Ascending aorta (tissue), 2 donors: ENCODE measurements at regions of chr19 and their contacts with region 1.

Region 1: DNA sequence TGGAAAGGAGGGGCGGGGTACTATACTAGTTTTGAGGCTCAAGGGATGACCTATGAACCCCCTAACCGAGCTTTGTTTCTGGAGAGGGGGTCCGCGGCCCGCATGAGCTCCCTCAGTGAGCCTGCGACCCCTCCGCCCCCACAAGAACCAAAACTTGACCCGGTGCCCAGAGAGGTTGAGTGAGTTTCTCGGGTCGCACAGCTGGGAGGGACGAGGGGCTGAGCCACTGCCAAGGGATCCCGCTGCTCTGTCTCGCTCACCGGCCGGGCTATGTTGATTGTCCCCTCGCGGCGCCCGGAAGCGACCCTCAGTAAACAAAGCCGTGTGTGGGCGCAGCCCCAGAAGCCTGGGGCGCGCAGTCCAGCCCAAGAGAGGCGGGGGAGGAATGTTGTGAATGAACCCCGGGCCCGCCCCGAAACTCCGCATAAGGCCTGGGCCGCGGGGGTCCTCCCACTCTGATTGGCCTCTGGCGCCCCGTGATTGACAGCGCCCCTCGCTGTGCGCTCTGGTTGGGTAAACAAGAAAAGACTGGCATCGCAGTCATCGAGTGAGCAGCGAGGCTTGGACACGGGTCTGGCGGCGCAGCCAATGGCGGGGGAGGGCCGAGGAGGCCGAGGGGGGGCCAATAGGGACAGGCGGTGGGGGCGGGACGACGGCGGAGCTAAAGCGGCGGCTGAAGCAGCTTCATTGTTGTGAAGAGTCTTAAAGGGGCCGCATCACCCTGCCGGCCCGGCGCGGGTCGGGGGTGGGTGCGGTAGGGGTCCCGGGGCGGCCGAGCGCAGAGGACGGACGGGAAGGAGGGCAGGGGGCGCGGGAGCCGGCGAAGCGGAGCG is at the start of gene ZSWIM4:
- DNase-seq: peak; percentile 98 to 100
- H3K4me3 ChIP-seq: peak within 1 kb of the TSS; percentile 86 to 88
- H3K27ac ChIP-seq: peak within 1 kb of the TSS; percentile 92 to 96
- H3K4me1 ChIP-seq: peaks cover 7 to 30% of the 10 kb centered on the region in 2 donors
- H3K27me3 ChIP-seq: no peaks in the 10 kb centered on the region
- CTCF ChIP-seq: no peak
- total RNA-seq, gene ZSWIM4: 23.2 TPM

Region 2: GRCh38 chr19:13784731-13785452 is 10.1 kb before region 1 on chr19:
- intact Hi-C with region 1: loop called (anchors 2 kb)
- DNase-seq: peak; percentile 28 to 87
- H3K4me3 ChIP-seq: no peak overlapping the region
- H3K27ac ChIP-seq: peak overlapping the region; percentile 76 to 94
- H3K4me1 ChIP-seq: peaks cover 25 to 53% of the 10 kb centered on the region in 2 donors
- H3K27me3 ChIP-seq: no peaks in the 10 kb centered on the region
- CTCF ChIP-seq: peak; percentile 72 to 83 (median 76)

Region 3: GRCh38 chr19:13823256-13823655 is 28.3 kb after region 1 on chr19:
- intact Hi-C with region 1: loop called (anchors 2 kb)
- DNase-seq: no peak
- H3K4me3 ChIP-seq: no peak overlapping the region
- H3K27ac ChIP-seq: peak overlapping the region; percentile 53 to 82
- H3K4me1 ChIP-seq: peaks cover 0 to 9% of the 10 kb centered on the region in 2 donors
- H3K27me3 ChIP-seq: no peaks in the 10 kb centered on the region
- CTCF ChIP-seq: no peak

Region 4: GRCh38 chr19:13833330-13834243 is 38.6 kb after region 1 on chr19:
- intact Hi-C with region 1: loop called (anchors 5 kb)
- DNase-seq: peak; percentile 83 to 96
- H3K4me3 ChIP-seq: peak overlapping the region in 1 of 2 donors; percentile 30
- H3K27ac ChIP-seq: peak overlapping the region; percentile 99 to 100
- H3K4me1 ChIP-seq: peaks cover 38 to 53% of the 10 kb centered on the region in 2 donors
- H3K27me3 ChIP-seq: no peaks in the 10 kb centered on the region
- CTCF ChIP-seq: peak; percentile 15 to 48 (median 44)

Region 5: DNA sequence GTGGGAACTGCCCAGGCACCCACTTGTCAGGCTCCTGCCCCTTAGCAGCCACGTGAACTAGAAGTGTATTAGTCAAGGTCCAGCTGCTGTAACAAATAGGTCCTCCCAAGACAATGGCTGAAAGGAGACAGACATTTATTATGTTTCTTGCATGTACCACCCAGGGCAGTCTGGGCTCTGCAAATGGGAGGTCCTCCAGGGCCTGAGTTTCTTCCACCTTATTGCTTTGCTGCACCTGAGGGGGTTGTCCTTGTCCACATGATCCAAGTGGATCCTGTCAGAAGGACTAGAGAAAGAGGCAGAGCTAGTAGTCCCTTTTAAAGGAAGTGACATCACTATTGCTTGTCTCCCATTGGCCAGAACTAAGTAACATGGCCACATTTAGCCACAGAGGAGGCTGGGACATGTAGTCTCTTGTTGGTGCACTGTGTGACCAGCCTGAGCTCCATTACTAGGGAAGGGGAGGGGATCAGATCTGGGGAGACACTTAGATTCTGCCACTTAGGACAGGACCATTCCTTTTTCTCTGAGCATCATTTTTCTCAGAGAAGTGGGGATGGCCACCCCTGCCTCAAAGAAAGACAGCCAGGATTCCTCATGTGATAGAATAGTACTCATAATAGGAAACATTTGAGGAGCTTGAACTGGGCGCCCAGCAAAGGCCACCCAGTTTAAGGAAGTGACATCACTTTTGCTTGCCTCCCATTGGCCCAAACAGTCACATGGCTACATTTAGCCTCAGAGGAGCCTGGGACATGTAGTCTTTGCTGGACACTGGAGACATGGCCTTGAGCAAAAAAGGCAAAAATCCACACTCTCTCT is 126.2 kb after region 1 on chr19:
- intact Hi-C with region 1: no loop called
- DNase-seq: no peak
- H3K4me3 ChIP-seq: no peak overlapping the region
- H3K27ac ChIP-seq: no peak overlapping the region
- H3K4me1 ChIP-seq: no peaks in the 10 kb centered on the region
- H3K27me3 ChIP-seq: no peaks in the 10 kb centered on the region
- CTCF ChIP-seq: no peak